Activated CD8-positive, alpha-beta memory T cell treated with anti-CD3 and anti-CD28 coated beads, Interleukin-2, amount 10 ng/mL, durations not matched to agents 7 days and 5 days (primary cell): ENCODE measurements at regions of chr19 and their contacts with region 1.

Region 1: DNA sequence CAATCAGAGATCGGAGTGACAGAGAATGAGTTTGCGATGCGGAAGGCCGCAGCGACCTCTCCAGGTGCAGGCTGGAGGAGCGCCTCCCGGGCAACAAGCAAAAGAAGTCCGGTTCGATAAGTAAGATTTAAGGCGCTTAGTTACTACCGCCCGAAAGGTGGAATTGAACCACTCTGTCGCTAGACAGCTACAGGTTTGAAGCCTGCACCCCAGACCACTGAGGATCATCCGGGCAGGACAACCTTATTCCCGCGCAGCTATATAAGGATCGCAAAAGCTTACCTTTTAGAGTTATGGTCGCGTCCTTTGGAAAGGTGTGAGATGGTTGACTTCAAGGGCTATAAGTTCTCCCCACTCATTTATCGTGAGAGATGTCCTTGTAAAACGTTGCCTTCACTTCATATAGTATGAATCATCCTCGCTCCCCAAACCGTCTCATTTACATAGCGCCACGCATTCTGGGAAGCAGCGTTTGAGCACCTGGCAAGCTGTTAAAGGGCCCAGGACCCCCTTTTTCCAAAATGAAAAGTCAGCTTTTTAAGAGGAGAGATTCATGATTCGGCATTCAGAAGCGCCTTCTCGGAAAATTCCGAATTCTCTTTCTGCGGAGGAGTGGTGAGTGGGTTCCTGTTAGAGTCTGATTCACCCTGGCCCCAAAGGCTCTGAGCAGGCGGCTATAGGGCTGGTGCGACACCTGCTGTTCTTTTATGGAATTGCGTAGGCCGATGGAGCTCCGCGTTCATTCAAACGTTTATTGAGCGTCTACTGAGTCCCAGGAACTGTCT is 10.8 kb downstream of the FOSB start:
- DNase-seq: peak; percentile 96
- ATAC-seq: peak; percentile 56
- H3K4me3 Mint-ChIP-seq: peak overlapping the region; percentile 55
- H3K27ac Mint-ChIP-seq: peak overlapping the region; percentile 96
- H3K4me1 Mint-ChIP-seq: peaks cover 33% of the 10 kb centered on the region
- H3K27me3 Mint-ChIP-seq: peaks cover 9% of the 10 kb centered on the region

Region 2: GRCh38 chr19:45405435-45406225 is 73.0 kb before region 1 on chr19:
- CTCF ChIA-PET with region 1: interaction called, 44 read pairs
- DNase-seq: peak; percentile 92
- ATAC-seq: peak; percentile 65
- H3K4me3 Mint-ChIP-seq: peak overlapping the region; percentile 94
- H3K27ac Mint-ChIP-seq: peak overlapping the region; percentile 88
- H3K4me1 Mint-ChIP-seq: peaks cover 31% of the 10 kb centered on the region
- H3K27me3 Mint-ChIP-seq: peaks cover 30% of the 10 kb centered on the region

Region 3: GRCh38 chr19:45455707-45456499 is 22.7 kb before region 1 on chr19:
- CTCF ChIA-PET with region 1: interaction called, 15 read pairs
- DNase-seq: peak; percentile 73
- ATAC-seq: peak; percentile 40
- H3K4me3 Mint-ChIP-seq: no peak overlapping the region
- H3K27ac Mint-ChIP-seq: no peak overlapping the region
- H3K4me1 Mint-ChIP-seq: peaks cover 29% of the 10 kb centered on the region
- H3K27me3 Mint-ChIP-seq: peaks cover 9% of the 10 kb centered on the region

Region 4: GRCh38 chr19:45496349-45496953 is 17.8 kb after region 1 on chr19:
- CTCF ChIA-PET with region 1: interaction called, 108 read pairs
- DNase-seq: peak; percentile 72
- ATAC-seq: peak; percentile 25
- H3K4me3 Mint-ChIP-seq: peak overlapping the region; percentile 29
- H3K27ac Mint-ChIP-seq: no peak overlapping the region
- H3K4me1 Mint-ChIP-seq: peaks cover 40% of the 10 kb centered on the region
- H3K27me3 Mint-ChIP-seq: peaks cover 25% of the 10 kb centered on the region

Region 5: GRCh38 chr19:45506246-45506990 is 27.8 kb after region 1 on chr19:
- CTCF ChIA-PET with region 1: interaction called, 108 read pairs
- DNase-seq: peak; percentile 98
- ATAC-seq: peak; percentile 76
- H3K4me3 Mint-ChIP-seq: peak overlapping the region; percentile 99
- H3K27ac Mint-ChIP-seq: peak overlapping the region; percentile 98
- H3K4me1 Mint-ChIP-seq: peaks cover 40% of the 10 kb centered on the region
- H3K27me3 Mint-ChIP-seq: no peaks in the 10 kb centered on the region

Region 6: DNA sequence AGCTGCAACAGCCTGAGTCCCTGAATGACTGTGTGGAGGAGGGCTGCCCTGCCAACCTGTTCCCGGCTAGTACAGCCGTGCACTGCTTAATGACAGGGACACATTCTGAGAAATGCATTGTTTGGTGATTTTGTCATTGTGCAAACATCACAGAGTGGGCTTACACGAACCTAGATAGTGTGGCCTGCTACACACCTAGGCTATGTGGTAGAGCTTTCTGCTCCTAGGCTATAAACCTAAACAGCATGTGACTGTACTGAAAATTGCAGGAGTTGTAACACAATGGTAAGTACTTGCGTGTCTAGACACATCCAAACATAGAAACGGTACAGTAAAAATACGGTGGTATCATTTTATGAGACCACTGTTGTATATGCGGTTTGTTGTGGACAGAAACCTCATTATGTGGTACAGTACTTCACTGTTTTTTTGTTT is 63.6 kb after region 1 on chr19:
- CTCF ChIA-PET with region 1: no interaction called
- DNase-seq: no peak
- ATAC-seq: no peak
- H3K4me3 Mint-ChIP-seq: no peak overlapping the region
- H3K27ac Mint-ChIP-seq: no peak overlapping the region
- H3K4me1 Mint-ChIP-seq: peaks cover 11% of the 10 kb centered on the region
- H3K27me3 Mint-ChIP-seq: no peaks in the 10 kb centered on the region

Region 7: GRCh38 chr19:45657520-45658167 is 179.0 kb after region 1 on chr19:
- CTCF ChIA-PET with region 1: no interaction called
- DNase-seq: no peak
- ATAC-seq: no peak
- H3K4me3 Mint-ChIP-seq: no peak overlapping the region
- H3K27ac Mint-ChIP-seq: no peak overlapping the region
- H3K4me1 Mint-ChIP-seq: no peaks in the 10 kb centered on the region
- H3K27me3 Mint-ChIP-seq: peaks cover 6% of the 10 kb centered on the region